ENCODE measurements at regions of chr3 and their contacts with region 1.

Region 1: DNA sequence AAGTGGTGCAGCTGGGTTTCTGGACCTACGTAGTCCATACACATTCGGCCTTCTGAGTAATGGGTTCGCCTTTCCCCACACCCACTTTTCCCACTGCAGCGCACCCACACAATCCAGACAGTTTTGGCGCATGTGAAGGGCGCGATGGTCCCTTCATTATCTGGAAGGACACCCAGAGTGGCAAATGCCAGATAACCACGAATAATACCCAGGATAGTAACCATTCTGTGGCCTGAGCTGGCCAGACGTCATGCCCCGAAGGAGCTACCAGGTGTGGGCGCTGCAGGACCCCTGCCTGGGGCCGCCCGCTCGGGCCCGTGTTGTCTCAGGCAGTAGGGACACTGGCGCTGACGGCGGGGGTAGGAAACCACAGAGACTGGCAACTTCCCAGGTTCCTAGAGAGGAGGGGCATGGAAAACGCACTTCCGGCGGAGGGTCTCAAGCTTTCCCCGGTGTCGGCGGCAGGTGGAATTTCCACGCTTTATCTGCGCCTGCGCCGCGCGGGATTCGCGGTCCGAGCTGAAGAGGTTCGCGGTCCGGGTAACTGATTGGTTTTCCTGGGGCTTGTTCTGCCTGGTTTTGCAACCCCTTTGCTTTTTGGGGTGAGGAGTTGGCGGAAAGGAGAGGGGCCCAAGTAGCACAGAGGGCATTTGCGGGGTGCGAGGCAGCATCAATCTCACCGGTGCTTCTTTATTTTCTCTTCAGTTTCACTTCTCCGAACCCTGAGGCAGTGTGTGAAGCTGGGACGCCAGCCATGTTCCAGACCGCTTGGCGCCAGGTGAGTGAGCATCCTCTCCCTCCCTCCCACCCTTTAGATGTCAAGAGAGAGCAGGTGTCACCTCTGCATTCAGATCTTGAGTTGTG is at the start of gene ZNF620:
- DNase-seq: peak; percentile 84 to 89 (median 86)
- H3K4me3 ChIP-seq: peak within 1 kb of the TSS; percentile 52 to 97 (median 85)
- H3K27ac ChIP-seq: peak within 1 kb of the TSS; percentile 78 to 80
- H3K4me1 ChIP-seq: peaks cover 3 to 11% (median 8%) of the 10 kb centered on the region in 4 experiments
- H3K27me3 ChIP-seq: no peaks in the 10 kb centered on the region

Region 2: GRCh38 chr3:40379674-40380306 is 126.0 kb before region 1 on chr3:
- CTCF ChIA-PET with region 1: no interaction called
- POLR2A ChIA-PET with region 1: no interaction called
- DNase-seq: no peak
- H3K4me3 ChIP-seq: no peak overlapping the region
- H3K27ac ChIP-seq: no peak overlapping the region
- H3K4me1 ChIP-seq: no peaks in the 10 kb centered on the region
- H3K27me3 ChIP-seq: peaks cover 0 to 5% (median 0%) of the 10 kb centered on the region in 5 experiments

Region 3: GRCh38 chr3:40476478-40477470 is 29.1 kb before region 1 on chr3 and contains the start of gene ZNF619:
- CTCF ChIA-PET with region 1: interaction called, 10 read pairs
- POLR2A ChIA-PET with region 1: no interaction called
- DNase-seq: peak; percentile 71 to 80 (median 79)
- H3K4me3 ChIP-seq: peak within 1 kb of the TSS; percentile 91 to 94 (median 93)
- H3K27ac ChIP-seq: peak within 1 kb of the TSS; percentile 88 to 95
- H3K4me1 ChIP-seq: peaks cover 3 to 13% (median 6%) of the 10 kb centered on the region in 4 experiments
- H3K27me3 ChIP-seq: no peaks in the 10 kb centered on the region

Region 4: DNA sequence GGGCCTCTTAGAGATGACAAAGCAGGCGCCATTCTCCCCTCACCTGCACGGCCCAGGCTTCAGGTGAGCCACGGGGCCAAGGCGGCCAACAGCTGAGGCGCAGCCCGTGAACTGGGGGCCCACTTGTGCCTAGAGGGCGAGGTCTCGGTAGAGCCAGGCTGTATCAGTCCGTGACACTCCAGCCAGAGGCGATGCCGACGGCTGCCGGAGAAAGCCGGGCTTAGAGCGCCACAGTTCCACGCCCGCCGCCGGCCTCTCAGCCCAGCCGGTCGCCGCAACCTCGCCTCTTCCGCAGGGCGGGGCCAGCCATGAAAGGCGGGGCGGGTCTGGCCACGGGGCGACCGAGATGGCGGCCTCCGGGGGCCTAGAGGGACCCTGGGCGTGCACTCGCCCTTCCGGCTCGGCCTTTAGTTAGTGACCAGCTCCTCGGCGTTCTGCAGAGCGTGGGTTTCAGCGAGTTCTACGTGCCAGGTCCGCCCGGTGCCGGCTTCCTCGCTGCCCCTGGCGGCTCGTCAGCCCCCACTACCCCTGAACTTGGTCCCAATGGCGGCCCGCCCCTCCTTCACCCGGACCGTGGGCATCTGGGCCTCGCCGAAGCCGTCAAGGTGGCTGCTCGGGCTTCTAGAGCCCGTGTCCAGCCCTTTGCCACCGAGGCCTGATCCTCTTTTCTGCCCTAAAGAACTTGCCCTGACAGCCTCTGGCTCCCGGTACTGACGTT is 18.9 kb after region 1 on chr3 and contains the start of gene ZNF621:
- CTCF ChIA-PET with region 1: interaction called, 13 read pairs
- POLR2A ChIA-PET with region 1: no interaction called
- DNase-seq: peak; percentile 79 to 89 (median 83)
- H3K4me3 ChIP-seq: peak within 1 kb of the TSS; percentile 56 to 97 (median 90)
- H3K27ac ChIP-seq: peak within 1 kb of the TSS; percentile 85 to 93
- H3K4me1 ChIP-seq: peaks cover 3 to 18% (median 13%) of the 10 kb centered on the region in 4 experiments
- H3K27me3 ChIP-seq: no peaks in the 10 kb centered on the region

Measured in common myeloid progenitor, CD34-positive (primary cell).